GM10248 (cell line): ENCODE measurements at regions of chr2 and their contacts with region 1.

Region 1: DNA sequence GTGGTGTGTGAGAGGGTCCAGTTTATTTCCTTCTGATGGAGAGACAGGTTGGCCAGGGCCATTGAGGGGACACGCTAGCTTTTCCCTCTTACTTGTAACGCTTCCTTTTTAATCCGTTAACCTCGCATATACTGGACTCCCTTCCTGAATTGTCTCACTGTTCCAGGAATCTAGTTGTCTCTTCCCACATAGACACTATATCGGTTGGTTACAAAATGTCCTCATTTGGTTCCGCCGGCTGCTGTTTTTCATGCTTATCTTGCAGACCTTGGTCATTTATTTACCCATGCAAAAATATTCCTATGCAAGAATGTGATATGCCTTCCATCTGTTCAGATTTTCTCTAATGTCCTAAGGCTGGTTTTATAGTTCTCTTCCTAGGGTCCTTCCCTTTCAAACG is 35.0 kb downstream of the NEURL3 start:
- DNase-seq: no peak
- CTCF ChIP-seq: no peak

Region 2: GRCh38 chr2:96485751-96486651 is 15.9 kb after region 1 on chr2:
- CTCF ChIA-PET with region 1: interaction called, 10 read pairs
- POLR2A ChIA-PET with region 1: no interaction called
- DNase-seq: peak; percentile 89
- CTCF ChIP-seq: no peak